Cardiac septum (tissue), 1 donor: ENCODE measurements at regions of chr5 and their contacts with region 1.

Region 1: GRCh38 chr5:155147222-155147621 is 133.7 kb downstream of the KIF4B start:
- DNase-seq: no peak

Region 2: DNA sequence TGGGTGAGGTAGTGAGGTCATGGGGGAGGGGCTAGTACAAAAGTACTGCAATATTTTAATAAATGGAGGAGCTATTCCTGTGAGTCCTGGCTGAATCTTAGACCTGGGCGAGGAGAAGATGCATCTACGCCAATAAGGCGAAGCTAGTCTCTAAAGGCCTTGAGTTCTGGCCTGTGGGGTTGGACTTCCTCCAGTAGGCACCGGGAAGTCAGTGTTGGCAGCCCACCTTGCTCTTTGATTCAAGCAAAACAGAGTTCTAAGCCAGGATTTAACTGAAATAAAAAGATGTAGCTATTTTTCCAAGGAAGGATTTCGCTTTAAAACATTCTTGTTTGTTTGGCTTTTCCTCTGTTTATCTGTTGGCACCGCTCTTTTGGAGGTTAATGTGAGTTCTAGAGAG is 110.9 kb after region 1 on chr5:
- intact Hi-C with region 1: loop called (anchors 10 kb)
- DNase-seq: no peak